Activated T-helper 2 cell treated with anti-CD3 and anti-CD28 coated beads, Interferon-gamma antibody, Interleukin-2, Interleukin-4, amounts not matched to agents 10 μg/mL and 5 μg/mL and 100 μg/mL, durations not matched to agents 14 hours and 24 hours and 36 hours (primary cell): ENCODE measurements at regions of chr7 and their contacts with region 1.

Region 1: GRCh38 chr7:135509903-135510602 is at the start of gene CNOT4:
- DNase-seq: peak; percentile 91
- H3K4me3 Mint-ChIP-seq: no peak within 1 kb of the TSS
- H3K27ac Mint-ChIP-seq: no peak within 1 kb of the TSS
- H3K4me1 Mint-ChIP-seq: peaks cover 12% of the 10 kb centered on the region
- H3K27me3 Mint-ChIP-seq: no peaks in the 10 kb centered on the region
- total RNA-seq, gene CNOT4: 19.3 and 24.0 TPM in 2 replicates

Region 2: DNA sequence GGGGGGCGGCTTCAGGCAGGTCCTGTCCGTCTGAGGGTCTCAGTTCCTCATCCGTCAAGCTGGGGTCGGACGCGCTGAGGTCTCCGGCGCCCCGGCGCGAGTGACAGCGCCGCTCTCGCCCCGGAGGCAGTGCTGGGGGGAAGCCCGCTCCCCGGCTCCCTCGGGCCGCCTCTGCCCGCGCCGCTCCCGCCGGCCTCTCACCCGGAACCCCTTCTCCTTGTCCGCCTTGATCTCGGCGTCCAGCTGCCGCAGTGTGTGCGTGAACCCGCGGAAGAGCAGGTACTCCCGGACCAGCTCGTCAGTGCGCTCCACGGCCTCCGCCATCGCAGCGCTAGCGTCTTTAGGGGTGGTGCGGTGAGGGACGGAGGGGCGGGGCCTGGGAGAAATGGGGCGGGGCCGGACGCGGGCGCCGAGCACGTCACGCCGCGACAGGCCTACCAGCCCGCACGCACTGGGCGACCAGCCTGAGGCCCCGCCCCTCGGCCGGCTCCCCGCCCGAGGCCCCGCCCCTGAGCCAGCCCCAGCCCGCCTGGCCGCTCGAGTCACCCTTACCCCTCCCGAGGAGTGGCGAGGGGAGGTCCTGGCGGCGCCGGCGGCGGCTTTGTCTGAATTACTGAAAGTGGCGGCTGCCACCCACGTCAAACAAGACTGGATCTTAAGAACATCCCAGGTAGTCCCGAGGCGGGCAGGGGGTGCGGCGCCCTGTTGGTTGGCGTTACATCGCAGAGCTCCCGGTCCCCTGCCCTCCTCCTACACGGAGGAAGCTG is 298.7 kb before region 1 on chr7 and contains the start of gene WDR91:
- intact Hi-C with region 1: loop called (anchors 1 kb)
- DNase-seq: peak; percentile 86
- H3K4me3 Mint-ChIP-seq: peak within 1 kb of the TSS; percentile 95
- H3K27ac Mint-ChIP-seq: peak within 1 kb of the TSS; percentile 96
- H3K4me1 Mint-ChIP-seq: peaks cover 32% of the 10 kb centered on the region
- H3K27me3 Mint-ChIP-seq: no peaks in the 10 kb centered on the region
- total RNA-seq, gene WDR91: 19.2 and 22.6 TPM in 2 replicates

Region 3: GRCh38 chr7:135414850-135415439 is 95.1 kb before region 1 on chr7:
- intact Hi-C with region 1: loop called (anchors 5 kb)
- DNase-seq: no peak
- H3K4me3 Mint-ChIP-seq: no peak overlapping the region
- H3K27ac Mint-ChIP-seq: no peak overlapping the region
- H3K4me1 Mint-ChIP-seq: peaks cover 2% of the 10 kb centered on the region
- H3K27me3 Mint-ChIP-seq: no peaks in the 10 kb centered on the region

Region 4: DNA sequence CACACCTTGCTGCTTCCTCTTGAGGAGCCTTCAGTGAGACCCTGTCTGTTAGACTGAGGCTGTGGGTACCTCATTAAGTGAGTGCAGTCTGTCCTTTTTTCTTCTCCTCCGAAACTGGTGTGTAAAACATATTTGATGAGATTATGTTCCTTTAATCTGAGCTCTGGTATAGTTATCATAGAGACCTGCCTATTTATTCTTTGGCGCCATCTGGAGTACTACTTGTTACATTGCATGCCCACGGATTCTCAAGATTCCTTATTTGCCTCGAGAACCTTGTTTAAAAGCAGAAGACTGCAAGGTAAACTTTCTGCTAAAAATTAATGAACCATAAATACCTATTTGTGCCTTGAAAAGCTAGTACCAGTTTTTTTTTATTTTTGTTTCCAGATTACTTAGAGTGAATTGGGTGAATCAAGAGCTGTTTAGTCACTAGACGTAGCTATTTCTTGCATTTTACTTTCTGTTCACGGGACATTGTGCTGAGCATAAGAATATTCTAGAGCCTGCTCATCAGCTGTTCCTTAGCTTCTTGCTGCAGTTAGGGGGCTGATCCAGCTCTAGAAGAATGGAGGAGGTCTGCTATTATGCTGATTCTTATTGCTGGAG is 135.3 kb after region 1 on chr7:
- intact Hi-C with region 1: loop called (anchors 1 kb)
- DNase-seq: no peak
- H3K4me3 Mint-ChIP-seq: no peak overlapping the region
- H3K27ac Mint-ChIP-seq: no peak overlapping the region
- H3K4me1 Mint-ChIP-seq: peaks cover 3% of the 10 kb centered on the region
- H3K27me3 Mint-ChIP-seq: no peaks in the 10 kb centered on the region